Common myeloid progenitor, CD34-positive (primary cell): ENCODE measurements at regions of chr2 and their contacts with region 1.

Region 1: GRCh38 chr2:60581433-60582282 is 28.2 kb upstream of the BCL11A start:
- DNase-seq: peak; percentile 75 to 87 (median 87)
- H3K4me3 ChIP-seq: peak overlapping the region; percentile 20 to 80 (median 57)
- H3K27ac ChIP-seq: no peak overlapping the region
- H3K4me1 ChIP-seq: peaks cover 0 to 9% (median 4%) of the 10 kb centered on the region in 4 experiments
- H3K27me3 ChIP-seq: peaks cover 0 to 3% (median 0%) of the 10 kb centered on the region in 5 experiments

Region 2: DNA sequence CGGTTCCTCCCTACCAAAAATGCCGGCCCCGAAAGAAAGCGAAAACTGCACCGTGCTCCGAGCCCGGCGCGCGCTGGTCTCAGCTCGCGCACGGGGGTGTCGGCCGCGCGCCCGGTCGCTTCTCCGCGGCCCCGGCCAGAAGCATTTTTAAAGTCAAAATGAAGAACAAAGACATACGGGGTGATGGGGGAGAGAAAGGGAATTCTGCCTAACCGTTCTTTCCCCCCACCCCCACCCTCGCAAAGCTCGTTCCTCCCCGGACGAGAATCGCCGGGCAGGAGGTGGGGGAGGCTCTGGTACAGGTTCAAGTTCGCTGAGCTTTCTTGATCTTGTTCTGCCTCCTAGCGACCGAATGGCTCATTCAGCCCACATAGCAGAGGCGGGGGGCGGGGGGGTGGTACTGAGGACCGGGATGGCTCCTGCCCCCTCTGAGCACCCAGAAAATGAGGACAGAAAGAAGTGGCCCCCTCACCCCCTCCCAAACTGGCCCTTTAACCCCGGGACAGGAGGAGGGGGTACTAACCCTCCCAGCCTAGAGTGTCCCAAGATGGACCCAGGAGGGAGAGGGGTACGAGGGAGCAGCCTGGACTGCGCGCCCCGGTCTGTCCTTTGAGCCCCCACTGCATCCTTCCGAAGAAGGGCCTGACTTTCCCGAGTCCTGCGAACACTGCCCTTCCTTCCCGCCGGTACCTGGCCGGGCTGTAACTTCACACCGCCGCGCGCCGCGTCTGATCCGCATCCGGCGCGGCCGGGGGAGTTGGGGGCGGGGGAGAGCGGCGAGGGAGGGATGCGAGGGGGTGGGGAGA is 31.3 kb before region 1 on chr2:
- CTCF ChIA-PET with region 1: interaction called, 113 read pairs
- POLR2A ChIA-PET with region 1: no interaction called
- DNase-seq: peak; percentile 91 to 95 (median 95)
- H3K4me3 ChIP-seq: peak overlapping the region; percentile 76 to 100 (median 94)
- H3K27ac ChIP-seq: peak overlapping the region; percentile 68 to 88
- H3K4me1 ChIP-seq: peaks cover 25 to 51% (median 40%) of the 10 kb centered on the region in 4 experiments
- H3K27me3 ChIP-seq: no peaks in the 10 kb centered on the region

Region 3: DNA sequence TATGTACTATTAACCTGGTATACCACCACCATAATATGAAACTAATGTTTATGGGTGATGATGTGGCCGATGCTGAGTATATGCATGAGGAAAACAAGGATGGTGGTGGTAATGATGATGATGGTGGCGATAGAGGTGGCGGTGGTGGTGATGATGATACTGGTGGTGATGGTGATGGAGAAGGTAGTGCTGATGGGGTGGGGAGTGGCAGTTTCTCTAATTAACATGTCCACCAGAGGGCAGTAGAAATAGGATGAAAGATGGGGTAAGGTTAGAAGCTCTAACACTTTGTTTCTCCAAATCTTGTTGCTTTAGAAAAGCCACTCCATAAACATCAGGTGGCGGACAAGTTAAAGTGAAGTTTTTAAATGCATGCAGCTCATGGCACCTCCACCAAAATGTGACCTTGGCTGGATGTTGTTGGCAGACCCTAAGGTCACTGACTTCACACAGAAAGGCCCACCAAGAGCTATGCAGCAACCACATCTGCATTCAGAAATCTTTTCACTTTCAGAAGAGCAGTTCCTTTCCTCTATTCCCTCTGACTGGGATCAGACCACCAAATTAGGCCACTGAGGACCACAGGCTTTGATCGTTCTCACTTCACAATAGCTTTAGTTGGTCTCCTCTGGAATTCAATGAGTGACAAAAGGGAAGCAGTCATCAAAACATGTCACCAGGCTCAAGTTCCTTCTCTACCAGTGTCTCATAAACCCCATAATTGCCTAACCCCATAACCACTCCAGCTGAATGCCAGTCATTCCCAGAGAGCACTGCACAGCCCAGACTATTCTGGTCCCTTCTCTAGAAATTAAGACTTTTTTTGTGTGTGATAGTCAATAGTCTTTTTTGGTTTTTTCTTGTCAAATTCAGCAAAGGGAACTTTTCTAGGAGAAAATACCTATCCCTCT is 20.7 kb before region 1 on chr2:
- CTCF ChIA-PET with region 1: interaction called, 113 read pairs
- POLR2A ChIA-PET with region 1: interaction called, 3 read pairs
- DNase-seq: peak in 2 of 3 donors; percentile 76
- H3K4me3 ChIP-seq: no peak overlapping the region
- H3K27ac ChIP-seq: no peak overlapping the region
- H3K4me1 ChIP-seq: peaks cover 6 to 46% (median 24%) of the 10 kb centered on the region in 4 experiments
- H3K27me3 ChIP-seq: no peaks in the 10 kb centered on the region

Region 4: GRCh38 chr2:60641811-60642788 is 60.4 kb after region 1 on chr2:
- CTCF ChIA-PET with region 1: interaction called, 13 read pairs
- POLR2A ChIA-PET with region 1: no interaction called
- DNase-seq: peak; percentile 76 to 85 (median 85)
- H3K4me3 ChIP-seq: no peak overlapping the region
- H3K27ac ChIP-seq: no peak overlapping the region
- H3K4me1 ChIP-seq: peaks cover 0 to 2% (median 0%) of the 10 kb centered on the region in 4 experiments
- H3K27me3 ChIP-seq: no peaks in the 10 kb centered on the region

Region 5: GRCh38 chr2:60861736-60862135 is 280.1 kb after region 1 on chr2:
- CTCF ChIA-PET with region 1: no interaction called
- POLR2A ChIA-PET with region 1: no interaction called
- DNase-seq: peak in 2 of 3 donors; percentile 68 to 80
- H3K4me3 ChIP-seq: no peak overlapping the region
- H3K27ac ChIP-seq: no peak overlapping the region
- H3K4me1 ChIP-seq: peaks cover 0 to 21% (median 1%) of the 10 kb centered on the region in 4 experiments
- H3K27me3 ChIP-seq: no peaks in the 10 kb centered on the region